Activated naive CD4-positive, alpha-beta T cell treated with anti-CD3 and anti-CD28 coated beads, Interleukin-2, amount 10 ng/mL, durations not matched to agents 7 days and 5 days (primary cell): ENCODE measurements at regions of chr19 and their contacts with region 1.

Region 1: GRCh38 chr19:46487802-46488445 is 7.7 kb downstream of the PNMA8B start:
- DNase-seq: peak; percentile 80
- H3K4me3 Mint-ChIP-seq: no peak overlapping the region
- H3K27ac Mint-ChIP-seq: no peak overlapping the region
- H3K4me1 Mint-ChIP-seq: peaks cover 18% of the 10 kb centered on the region
- H3K27me3 Mint-ChIP-seq: peaks cover 91% of the 10 kb centered on the region

Region 2: GRCh38 chr19:46392243-46392801 is 95.6 kb before region 1 on chr19:
- CTCF ChIA-PET with region 1: interaction called, 17 read pairs
- DNase-seq: no peak
- H3K4me3 Mint-ChIP-seq: no peak overlapping the region
- H3K27ac Mint-ChIP-seq: no peak overlapping the region
- H3K4me1 Mint-ChIP-seq: no peaks in the 10 kb centered on the region
- H3K27me3 Mint-ChIP-seq: no peaks in the 10 kb centered on the region

Region 3: GRCh38 chr19:46404055-46404752 is 83.7 kb before region 1 on chr19:
- CTCF ChIA-PET with region 1: interaction called, 30 read pairs
- DNase-seq: no peak
- H3K4me3 Mint-ChIP-seq: no peak overlapping the region
- H3K27ac Mint-ChIP-seq: peak overlapping the region; percentile 55
- H3K4me1 Mint-ChIP-seq: peaks cover 13% of the 10 kb centered on the region
- H3K27me3 Mint-ChIP-seq: peaks cover 90% of the 10 kb centered on the region

Region 4: DNA sequence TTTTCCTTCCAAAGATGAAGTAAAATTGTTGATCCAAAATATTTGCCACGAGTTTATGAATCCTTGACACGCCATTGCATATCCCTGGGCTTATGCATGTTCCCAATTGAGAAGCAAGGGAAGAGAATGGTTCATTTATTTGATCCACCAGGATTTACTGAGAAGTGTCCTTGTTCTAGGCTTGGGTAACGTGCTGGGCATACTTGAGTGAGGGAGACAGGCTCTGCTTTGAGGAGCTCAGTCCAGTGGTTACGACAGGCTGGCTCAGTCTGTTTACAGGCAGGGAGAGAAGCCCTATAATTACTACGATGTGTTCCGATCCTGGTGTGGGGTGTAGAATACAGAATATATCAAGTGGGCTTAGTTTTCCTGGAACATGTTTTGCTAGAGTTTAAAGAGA is 52.9 kb before region 1 on chr19:
- CTCF ChIA-PET with region 1: no interaction called
- DNase-seq: no peak
- H3K4me3 Mint-ChIP-seq: no peak overlapping the region
- H3K27ac Mint-ChIP-seq: no peak overlapping the region
- H3K4me1 Mint-ChIP-seq: peaks cover under 1% of the 10 kb centered on the region
- H3K27me3 Mint-ChIP-seq: peaks cover 25% of the 10 kb centered on the region